ENCODE measurements at regions of chr1 and their contacts with region 1.

Region 1: GRCh38 chr1:46667782-46668760 is at the start of gene ATPAF1:
- DNase-seq: peak; percentile 31 to 90
- H3K4me3 ChIP-seq: peak within 1 kb of the TSS; percentile 96 to 97
- H3K27ac ChIP-seq: peak within 1 kb of the TSS; percentile 80 to 89
- H3K4me1 ChIP-seq: peaks cover 11 to 19% of the 10 kb centered on the region in 2 donors
- H3K27me3 ChIP-seq: no peaks in the 10 kb centered on the region
- CTCF ChIP-seq: no peak
- total RNA-seq, gene ATPAF1: 23.6 TPM

Region 2: GRCh38 chr1:46603858-46604549 is 64.1 kb before region 1 on chr1 and contains the start of gene MKNK1:
- intact Hi-C with region 1: loop called (anchors 1 kb)
- DNase-seq: peak; percentile 87 to 98
- H3K4me3 ChIP-seq: peak within 1 kb of the TSS; percentile 89 to 90
- H3K27ac ChIP-seq: peak within 1 kb of the TSS; percentile 82 to 83
- H3K4me1 ChIP-seq: peaks cover 10 to 38% of the 10 kb centered on the region in 2 donors
- H3K27me3 ChIP-seq: no peaks in the 10 kb centered on the region
- CTCF ChIP-seq: peak in 2 of 3 experiments; percentile 14 to 17
- total RNA-seq, gene MKNK1: 47.8 TPM

Region 3: GRCh38 chr1:46637444-46638083 is 30.5 kb before region 1 on chr1:
- intact Hi-C with region 1: loop called (anchors 2 kb)
- DNase-seq: no peak
- H3K4me3 ChIP-seq: no peak overlapping the region
- H3K27ac ChIP-seq: peak overlapping the region; percentile 73 to 92
- H3K4me1 ChIP-seq: peaks cover 0 to 10% of the 10 kb centered on the region in 2 donors
- H3K27me3 ChIP-seq: no peaks in the 10 kb centered on the region
- CTCF ChIP-seq: no peak

Region 4: GRCh38 chr1:46687093-46687659 is 19.1 kb after region 1 on chr1:
- intact Hi-C with region 1: no loop called
- DNase-seq: peak in 1 of 2 donors; percentile 68
- H3K4me3 ChIP-seq: no peak overlapping the region
- H3K27ac ChIP-seq: peak overlapping the region in 1 of 2 donors; percentile 60
- H3K4me1 ChIP-seq: peaks cover 0 to 4% of the 10 kb centered on the region in 2 donors
- H3K27me3 ChIP-seq: no peaks in the 10 kb centered on the region
- CTCF ChIP-seq: no peak

Region 5: GRCh38 chr1:46757241-46757959 is 89.3 kb after region 1 on chr1:
- intact Hi-C with region 1: no loop called
- DNase-seq: no peak
- H3K4me3 ChIP-seq: no peak overlapping the region
- H3K27ac ChIP-seq: no peak overlapping the region
- H3K4me1 ChIP-seq: no peaks in the 10 kb centered on the region
- H3K27me3 ChIP-seq: no peaks in the 10 kb centered on the region
- CTCF ChIP-seq: no peak